PC-9 (cell line): ENCODE measurements at regions of chr4 and their contacts with region 1.

Region 1: GRCh38 chr4:95165926-95166524 is 382.7 kb downstream of the UNC5C start:
- DNase-seq: peak in 1 of 2 experiments; percentile 36
- H3K4me3 ChIP-seq: no peak overlapping the region
- H3K27ac ChIP-seq: no peak overlapping the region
- H3K4me1 ChIP-seq: no peaks in the 10 kb centered on the region
- H3K27me3 ChIP-seq: no peaks in the 10 kb centered on the region
- CTCF ChIP-seq: peak; percentile 72

Region 2: GRCh38 chr4:94221916-94222315 is 944.1 kb before region 1 on chr4:
- CTCF ChIA-PET with region 1: no interaction called
- POLR2A ChIA-PET with region 1: no interaction called
- intact Hi-C with region 1: no loop called
- DNase-seq: no peak
- H3K4me3 ChIP-seq: no peak overlapping the region
- H3K27ac ChIP-seq: no peak overlapping the region
- H3K4me1 ChIP-seq: no peaks in the 10 kb centered on the region
- H3K27me3 ChIP-seq: no peaks in the 10 kb centered on the region
- CTCF ChIP-seq: no peak

Region 3: DNA sequence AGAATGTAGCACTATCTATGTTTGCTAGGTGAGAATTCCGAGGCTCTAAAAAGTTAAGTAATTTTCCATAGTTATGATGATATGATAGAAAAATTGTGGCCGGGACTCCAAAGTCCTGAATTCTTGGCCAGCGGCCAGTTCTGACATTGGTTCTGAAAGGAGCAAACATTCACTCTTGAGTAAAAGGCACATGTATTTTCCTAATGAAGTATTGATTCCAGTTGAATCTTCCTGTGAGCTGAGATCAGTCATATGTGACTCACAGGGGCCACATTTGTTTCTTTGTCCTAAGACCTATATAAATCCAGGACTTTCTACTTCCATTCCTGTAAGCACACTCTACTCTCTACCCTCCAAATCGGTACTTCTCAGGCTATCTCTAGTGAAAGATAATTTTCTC is 58.4 kb before region 1 on chr4:
- CTCF ChIA-PET with region 1: no interaction called
- POLR2A ChIA-PET with region 1: no interaction called
- intact Hi-C with region 1: no loop called
- DNase-seq: no peak
- H3K4me3 ChIP-seq: no peak overlapping the region
- H3K27ac ChIP-seq: no peak overlapping the region
- H3K4me1 ChIP-seq: no peaks in the 10 kb centered on the region
- H3K27me3 ChIP-seq: no peaks in the 10 kb centered on the region
- CTCF ChIP-seq: no peak

Region 4: GRCh38 chr4:95304898-95305297 is 138.9 kb after region 1 on chr4:
- CTCF ChIA-PET with region 1: no interaction called
- POLR2A ChIA-PET with region 1: no interaction called
- intact Hi-C with region 1: loop called (anchors 10 kb)
- DNase-seq: peak; percentile 48 to 78
- H3K4me3 ChIP-seq: no peak overlapping the region
- H3K27ac ChIP-seq: no peak overlapping the region
- H3K4me1 ChIP-seq: peaks cover 11% of the 10 kb centered on the region; the same call in 1 of the 2 replicates
- H3K27me3 ChIP-seq: no peaks in the 10 kb centered on the region
- CTCF ChIP-seq: no peak

Region 5: DNA sequence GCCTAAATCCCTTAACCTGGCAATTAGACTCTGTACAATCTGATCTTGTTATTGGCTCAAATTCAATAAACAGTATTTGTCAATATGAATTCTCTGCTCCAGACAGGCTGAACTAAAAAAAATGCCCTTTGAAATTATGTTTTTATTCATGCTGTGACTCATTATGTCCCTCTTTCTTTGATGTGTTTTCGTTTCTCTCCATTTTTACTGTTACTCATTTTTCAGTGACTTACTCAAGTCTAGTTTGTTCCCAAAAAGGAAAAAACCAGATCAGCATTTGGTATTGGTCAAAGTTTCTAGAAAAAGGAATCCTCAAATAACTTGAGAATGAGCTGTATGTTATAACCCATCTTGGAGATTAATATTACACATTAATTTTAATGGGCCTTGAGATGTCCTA is 342.4 kb after region 1 on chr4:
- CTCF ChIA-PET with region 1: no interaction called
- POLR2A ChIA-PET with region 1: no interaction called
- intact Hi-C with region 1: loop called (anchors 2 kb)
- DNase-seq: no peak
- H3K4me3 ChIP-seq: no peak overlapping the region
- H3K27ac ChIP-seq: no peak overlapping the region
- H3K4me1 ChIP-seq: no peaks in the 10 kb centered on the region
- H3K27me3 ChIP-seq: no peaks in the 10 kb centered on the region
- CTCF ChIP-seq: no peak

Region 6: GRCh38 chr4:95599777-95600400 is 433.9 kb after region 1 on chr4:
- CTCF ChIA-PET with region 1: no interaction called
- POLR2A ChIA-PET with region 1: no interaction called
- intact Hi-C with region 1: loop called (anchors 5 kb)
- DNase-seq: no peak
- H3K4me3 ChIP-seq: no peak overlapping the region
- H3K27ac ChIP-seq: no peak overlapping the region
- H3K4me1 ChIP-seq: no peaks in the 10 kb centered on the region
- H3K27me3 ChIP-seq: no peaks in the 10 kb centered on the region
- CTCF ChIP-seq: no peak